ENCODE measurements at regions of chr12 and their contacts with region 1.

Region 1: GRCh38 chr12:25677232-25677937 is 124.3 kb upstream of the LMNTD1 start:
- DNase-seq: no peak
- H3K4me3 ChIP-seq: no peak overlapping the region
- H3K4me3 Mint-ChIP-seq: no peak overlapping the region
- H3K27ac Mint-ChIP-seq: no peak overlapping the region
- H3K4me1 ChIP-seq: peaks cover 15% of the 10 kb centered on the region
- H3K4me1 Mint-ChIP-seq: no peaks in the 10 kb centered on the region
- H3K27me3 ChIP-seq: no peaks in the 10 kb centered on the region
- H3K27me3 Mint-ChIP-seq: no peaks in the 10 kb centered on the region
- CTCF ChIP-seq: peak in 1 of 2 experiments; percentile 21

Region 2: DNA sequence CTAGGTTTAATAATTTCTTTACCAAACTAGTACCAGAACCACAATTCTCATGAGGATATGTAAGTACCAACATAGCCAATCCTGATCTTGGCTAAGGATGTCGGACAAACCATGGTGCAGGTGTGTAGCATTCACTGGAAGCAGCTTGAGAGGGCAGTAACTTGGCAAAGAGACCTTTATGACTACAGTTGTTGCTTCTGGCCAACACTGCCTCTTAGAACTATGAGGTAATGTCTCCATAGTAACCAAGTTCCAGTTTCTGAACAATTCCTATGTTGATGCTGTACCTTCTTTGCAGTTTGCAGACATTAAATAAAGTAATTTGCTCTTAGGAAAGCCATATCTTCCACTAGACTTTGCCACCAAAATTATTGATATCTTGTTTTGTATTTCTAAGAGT is 124.3 kb before region 1 on chr12 and contains the start of gene LMNTD1:
- CTCF ChIA-PET with region 1: no interaction called
- POLR2A ChIA-PET with region 1: no interaction called
- intact Hi-C with region 1: no loop called
- DNase-seq: no peak
- H3K4me3 ChIP-seq: no peak within 1 kb of the TSS
- H3K4me3 Mint-ChIP-seq: no peak within 1 kb of the TSS
- H3K27ac Mint-ChIP-seq: no peak within 1 kb of the TSS
- H3K4me1 ChIP-seq: no peaks in the 10 kb centered on the region
- H3K4me1 Mint-ChIP-seq: peaks cover 3% of the 10 kb centered on the region
- H3K27me3 ChIP-seq: no peaks in the 10 kb centered on the region
- H3K27me3 Mint-ChIP-seq: peaks cover 3% of the 10 kb centered on the region
- CTCF ChIP-seq: no peak
- total RNA-seq, gene LMNTD1: 0.60 TPM in 1 of 2 replicates, not detected in the other

Region 3: GRCh38 chr12:25644979-25645378 is 32.4 kb before region 1 on chr12:
- CTCF ChIA-PET with region 1: no interaction called
- POLR2A ChIA-PET with region 1: no interaction called
- intact Hi-C with region 1: no loop called
- DNase-seq: no peak
- H3K4me3 ChIP-seq: no peak overlapping the region
- H3K4me3 Mint-ChIP-seq: no peak overlapping the region
- H3K27ac Mint-ChIP-seq: no peak overlapping the region
- H3K4me1 ChIP-seq: no peaks in the 10 kb centered on the region
- H3K4me1 Mint-ChIP-seq: no peaks in the 10 kb centered on the region
- H3K27me3 ChIP-seq: no peaks in the 10 kb centered on the region
- H3K27me3 Mint-ChIP-seq: no peaks in the 10 kb centered on the region
- CTCF ChIP-seq: no peak

Region 4: GRCh38 chr12:25824734-25825133 is 147.3 kb after region 1 on chr12:
- CTCF ChIA-PET with region 1: no interaction called
- POLR2A ChIA-PET with region 1: no interaction called
- intact Hi-C with region 1: loop called (anchors 5 kb)
- DNase-seq: no peak
- H3K4me3 ChIP-seq: no peak overlapping the region
- H3K4me3 Mint-ChIP-seq: no peak overlapping the region
- H3K27ac Mint-ChIP-seq: no peak overlapping the region
- H3K4me1 ChIP-seq: peaks cover 8% of the 10 kb centered on the region
- H3K4me1 Mint-ChIP-seq: peaks cover 13% of the 10 kb centered on the region
- H3K27me3 ChIP-seq: no peaks in the 10 kb centered on the region
- H3K27me3 Mint-ChIP-seq: no peaks in the 10 kb centered on the region
- CTCF ChIP-seq: no peak

Region 5: DNA sequence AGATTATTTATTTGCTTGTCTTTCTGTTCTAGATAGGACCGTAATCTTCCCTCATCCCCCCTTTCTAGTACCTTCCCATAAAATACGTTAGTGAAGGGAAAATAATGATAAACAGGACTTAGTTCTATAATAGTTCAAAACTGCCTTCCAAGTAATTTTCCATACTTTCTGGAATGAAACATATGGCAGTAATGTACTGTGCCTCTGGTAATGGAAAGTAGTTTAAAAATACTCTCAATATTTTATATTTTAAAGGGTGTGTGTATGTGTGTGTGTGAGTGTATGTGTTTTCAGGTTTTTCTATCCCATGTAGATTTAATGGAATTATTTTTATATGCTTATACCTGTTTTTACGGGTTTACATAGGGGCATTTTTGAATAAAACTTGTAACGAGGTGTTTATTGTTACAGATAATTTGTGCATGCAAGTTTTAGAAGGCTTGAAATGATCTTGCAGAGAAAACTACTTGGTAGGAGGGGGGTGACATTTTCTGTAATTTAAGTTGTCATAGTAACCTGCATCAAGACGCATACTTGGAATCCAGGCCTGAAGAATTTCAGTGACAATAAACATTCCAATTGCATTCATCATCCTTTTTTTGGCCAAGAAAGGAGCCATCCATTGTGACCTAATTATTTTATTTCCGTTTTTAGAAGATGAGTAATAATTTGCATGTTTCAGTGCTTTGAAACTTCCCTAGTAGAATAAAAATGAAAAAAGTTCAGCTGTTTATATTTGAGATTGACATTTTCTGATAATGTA is 320.0 kb after region 1 on chr12:
- CTCF ChIA-PET with region 1: no interaction called
- POLR2A ChIA-PET with region 1: no interaction called
- intact Hi-C with region 1: loop called (anchors 1 kb)
- DNase-seq: peak in 1 of 2 experiments; percentile 46
- H3K4me3 ChIP-seq: no peak overlapping the region
- H3K4me3 Mint-ChIP-seq: no peak overlapping the region
- H3K27ac Mint-ChIP-seq: peak overlapping the region; percentile 50
- H3K4me1 ChIP-seq: peaks cover 15% of the 10 kb centered on the region
- H3K4me1 Mint-ChIP-seq: peaks cover 45% of the 10 kb centered on the region
- H3K27me3 ChIP-seq: no peaks in the 10 kb centered on the region
- H3K27me3 Mint-ChIP-seq: no peaks in the 10 kb centered on the region
- CTCF ChIP-seq: no peak

Region 6: GRCh38 chr12:26091822-26092221 is 414.4 kb after region 1 on chr12:
- CTCF ChIA-PET with region 1: no interaction called
- POLR2A ChIA-PET with region 1: no interaction called
- intact Hi-C with region 1: loop called (anchors 2 kb)
- DNase-seq: peak in 1 of 2 experiments; percentile 42
- H3K4me3 ChIP-seq: no peak overlapping the region
- H3K4me3 Mint-ChIP-seq: peak overlapping the region; percentile 7
- H3K27ac Mint-ChIP-seq: peak overlapping the region; percentile 84
- H3K4me1 ChIP-seq: peaks cover 61% of the 10 kb centered on the region
- H3K4me1 Mint-ChIP-seq: peaks cover 45% of the 10 kb centered on the region
- H3K27me3 ChIP-seq: no peaks in the 10 kb centered on the region
- H3K27me3 Mint-ChIP-seq: no peaks in the 10 kb centered on the region
- CTCF ChIP-seq: peak; percentile 30 to 34